Breast epithelium (tissue), 4 donors: ENCODE measurements at regions of chr2 and their contacts with region 1.

Region 1: DNA sequence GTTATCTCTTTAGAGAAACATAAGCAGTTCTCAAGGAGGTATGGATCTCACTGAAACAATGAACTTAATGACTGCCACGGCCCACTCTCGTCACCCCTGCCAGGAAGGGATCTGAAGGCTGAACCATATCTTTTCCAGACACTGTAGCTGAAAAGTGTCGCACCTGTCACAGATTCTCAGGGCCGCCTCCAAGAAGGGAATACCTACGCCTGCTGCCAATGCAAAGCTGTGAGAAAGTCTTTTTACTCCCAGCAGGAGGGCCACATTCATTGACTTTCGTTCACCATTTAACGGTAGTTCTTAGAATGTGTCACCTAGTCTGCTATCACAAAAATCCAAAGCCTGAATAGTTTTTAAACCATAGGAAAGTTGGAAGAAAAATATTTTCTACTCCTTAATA is 66.7 kb upstream of the SH3BP4 start:
- DNase-seq: no peak
- H3K4me3 ChIP-seq: no peak overlapping the region
- H3K27ac ChIP-seq: no peak overlapping the region
- H3K4me1 ChIP-seq: no peaks in the 10 kb centered on the region
- H3K27me3 ChIP-seq: no peaks in the 10 kb centered on the region
- CTCF ChIP-seq: no peak
- POLR2A ChIP-seq: no peak

Region 2: DNA sequence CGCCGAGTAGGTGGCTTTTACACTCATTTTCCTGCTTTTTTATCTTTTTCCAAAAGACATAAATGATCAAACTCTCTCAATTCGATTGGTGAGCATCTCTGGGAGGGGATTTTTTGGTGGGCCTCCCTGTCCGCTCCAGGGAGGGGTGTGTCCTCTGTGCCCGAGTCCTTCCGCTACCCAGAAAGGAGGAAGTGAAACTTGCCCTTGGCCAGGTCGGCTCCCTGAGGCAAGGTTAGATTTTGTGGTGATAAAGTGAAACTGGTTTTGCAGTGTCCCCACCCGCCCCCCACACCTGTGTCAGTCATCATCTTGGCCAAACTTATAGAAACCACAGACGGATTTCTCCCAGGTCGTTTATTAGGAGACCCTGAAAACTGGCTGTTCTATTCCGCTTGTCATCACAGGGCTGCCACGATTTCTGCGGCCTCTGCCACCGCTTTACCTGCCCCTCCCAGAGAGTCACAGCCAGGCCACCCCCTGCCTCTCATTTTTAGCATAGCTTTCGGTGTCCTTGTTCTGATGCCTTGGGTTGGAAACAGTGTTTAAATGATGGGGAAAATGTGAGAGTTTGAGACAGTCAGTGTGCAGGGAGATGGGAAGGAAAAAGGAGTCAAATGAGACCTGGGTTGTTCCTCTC is 160.3 kb after region 1 on chr2:
- intact Hi-C with region 1: loop called (anchors 5 kb)
- DNase-seq: no peak
- H3K4me3 ChIP-seq: no peak overlapping the region
- H3K27ac ChIP-seq: peak overlapping the region in 1 of 2 donors; percentile 77
- H3K4me1 ChIP-seq: no peaks in the 10 kb centered on the region
- H3K27me3 ChIP-seq: no peaks in the 10 kb centered on the region
- CTCF ChIP-seq: no peak
- POLR2A ChIP-seq: no peak

Region 3: DNA sequence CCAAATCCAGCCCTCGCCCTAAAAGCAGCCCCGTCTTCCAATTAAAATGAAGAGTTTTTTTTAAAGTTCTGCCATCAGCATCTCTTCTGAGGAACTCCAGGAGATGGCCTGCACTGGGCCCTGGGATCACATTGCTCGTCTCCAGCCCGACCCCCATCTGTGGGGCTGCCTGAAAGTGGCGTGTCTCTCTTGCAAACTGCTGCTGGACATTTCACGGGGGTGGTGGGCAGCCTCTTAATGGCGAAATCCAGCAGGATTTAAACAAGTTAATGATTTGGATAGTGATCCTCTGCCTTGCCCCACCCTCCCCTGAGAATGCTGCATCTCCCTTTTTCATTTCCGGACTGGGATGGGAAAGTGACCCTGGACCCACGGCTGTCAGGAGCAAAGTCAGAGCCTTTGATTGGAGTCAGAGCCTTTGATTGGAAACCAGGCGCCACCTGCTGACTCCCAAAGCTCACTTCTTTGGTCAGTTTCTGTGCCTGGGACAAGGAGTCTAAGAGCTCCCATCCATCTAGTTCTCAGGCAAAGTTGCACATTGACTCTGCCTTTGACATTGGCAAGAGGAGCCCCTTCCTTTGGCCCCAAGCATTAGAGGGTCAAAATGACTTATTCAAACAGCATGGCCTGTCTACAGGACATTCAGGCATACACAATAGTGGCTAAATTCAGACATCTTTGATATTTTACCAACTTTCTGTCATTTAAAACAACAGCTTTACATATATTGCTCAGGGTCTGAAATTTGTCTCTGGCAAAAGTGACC is 221.9 kb after region 1 on chr2:
- intact Hi-C with region 1: no loop called
- DNase-seq: peak; percentile 54 to 70
- H3K4me3 ChIP-seq: no peak overlapping the region
- H3K27ac ChIP-seq: no peak overlapping the region
- H3K4me1 ChIP-seq: no peaks in the 10 kb centered on the region
- H3K27me3 ChIP-seq: no peaks in the 10 kb centered on the region
- CTCF ChIP-seq: peak; percentile 22 to 75 (median 74)
- POLR2A ChIP-seq: no peak